Gastrocnemius medialis (tissue), 4 donors: ENCODE measurements at regions of chr6 and their contacts with region 1.

Region 1: DNA sequence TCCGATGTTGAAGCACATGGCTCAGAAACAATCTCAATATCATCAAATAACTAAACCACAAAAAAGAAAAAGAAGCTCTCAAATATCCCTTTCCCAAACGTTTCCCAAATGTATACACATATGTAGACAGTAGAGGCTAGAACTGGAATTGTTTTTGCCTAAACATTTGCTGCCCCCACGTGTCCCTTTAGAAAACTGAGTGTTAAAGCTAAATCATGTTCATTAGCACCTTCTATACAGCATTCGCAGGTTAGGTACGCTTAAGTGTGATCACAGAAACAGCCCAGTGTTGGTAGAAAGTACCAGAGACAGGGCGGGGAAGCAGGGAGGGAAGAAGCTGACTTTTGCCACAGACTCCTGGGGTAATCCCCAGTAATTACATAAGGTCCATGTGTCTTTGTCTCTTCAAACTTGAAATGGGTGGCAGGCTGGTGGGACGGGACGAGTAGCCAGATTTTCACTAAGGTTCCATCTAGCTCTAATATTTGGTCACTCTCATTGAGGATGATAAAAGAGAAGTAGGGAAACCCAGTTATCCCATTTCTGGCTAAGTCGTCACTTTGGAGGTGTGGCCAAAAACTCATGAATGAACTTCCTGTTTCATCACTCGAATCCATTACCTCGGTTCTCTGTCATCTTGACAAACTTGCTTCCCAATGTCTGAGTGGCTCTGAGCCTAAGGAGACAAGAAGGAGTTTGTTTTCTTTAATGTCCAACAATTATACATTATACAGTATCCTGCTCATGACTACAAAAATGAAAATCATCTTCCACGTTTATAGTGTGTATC is 15.0 kb upstream of the TFAP2A start:
- DNase-seq: no peak
- ATAC-seq: no peak
- H3K4me3 ChIP-seq: no peak overlapping the region
- H3K27ac ChIP-seq: no peak overlapping the region
- H3K4me1 ChIP-seq: peaks cover 4 to 10% of the 10 kb centered on the region in 2 donors
- H3K27me3 ChIP-seq: peaks cover 27 to 30% (median 28%) of the 10 kb centered on the region in 3 donors
- CTCF ChIP-seq: peak in 3 of 5 experiments; percentile 14 to 26 (median 15)
- POLR2A ChIP-seq: no peak

Region 2: DNA sequence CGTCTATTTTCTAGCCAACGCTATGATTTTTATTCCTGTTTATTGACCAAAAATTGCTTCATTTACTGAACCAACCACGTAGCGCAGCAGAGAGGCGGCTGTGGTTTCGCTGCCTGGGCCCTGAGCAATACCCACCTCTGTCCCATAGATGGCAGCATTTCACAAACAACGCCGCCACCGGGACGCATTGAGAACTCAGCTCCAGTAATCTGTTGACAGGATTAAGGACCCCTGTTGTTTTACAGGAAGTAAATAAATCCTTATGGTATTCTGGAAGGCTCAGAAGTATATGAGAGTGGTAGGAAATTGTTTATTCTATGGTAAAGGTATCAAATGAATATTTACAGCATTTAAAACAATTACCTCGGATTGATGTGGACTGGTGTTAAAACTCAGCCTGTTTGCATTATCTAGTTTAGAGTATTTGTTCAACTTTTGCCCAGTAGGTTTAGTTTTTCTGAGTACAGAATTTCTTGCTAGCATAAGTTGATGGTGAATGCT is 1446.6 kb before region 1 on chr6:
- in situ Hi-C with region 1: loop called (anchors 5 to 25 kb)
- intact Hi-C with region 1: loop called (anchors 5 kb)
- DNase-seq: peak; percentile 11 to 27
- ATAC-seq: peak; percentile 55 to 62
- H3K4me3 ChIP-seq: no peak overlapping the region
- H3K27ac ChIP-seq: no peak overlapping the region
- H3K4me1 ChIP-seq: no peaks in the 10 kb centered on the region
- H3K27me3 ChIP-seq: no peaks in the 10 kb centered on the region
- CTCF ChIP-seq: peak; percentile 42 to 89 (median 59)
- POLR2A ChIP-seq: no peak

Region 3: GRCh38 chr6:9250852-9251251 is 1179.0 kb before region 1 on chr6:
- in situ Hi-C with region 1: no loop called
- intact Hi-C with region 1: loop called (anchors 10 kb)
- DNase-seq: no peak
- ATAC-seq: no peak
- H3K4me3 ChIP-seq: no peak overlapping the region
- H3K27ac ChIP-seq: no peak overlapping the region
- H3K4me1 ChIP-seq: no peaks in the 10 kb centered on the region
- H3K27me3 ChIP-seq: no peaks in the 10 kb centered on the region
- CTCF ChIP-seq: peak in 1 of 5 experiments; percentile 16
- POLR2A ChIP-seq: no peak

Region 4: GRCh38 chr6:9540534-9541126 is 889.2 kb before region 1 on chr6:
- in situ Hi-C with region 1: loop called in 3 of 4 experiments (anchors 10 to 25 kb)
- intact Hi-C with region 1: no loop called
- DNase-seq: no peak
- ATAC-seq: no peak
- H3K4me3 ChIP-seq: no peak overlapping the region
- H3K27ac ChIP-seq: no peak overlapping the region
- H3K4me1 ChIP-seq: no peaks in the 10 kb centered on the region
- H3K27me3 ChIP-seq: no peaks in the 10 kb centered on the region
- CTCF ChIP-seq: peak in 2 of 5 experiments; percentile 21 to 33
- POLR2A ChIP-seq: no peak

Region 5: DNA sequence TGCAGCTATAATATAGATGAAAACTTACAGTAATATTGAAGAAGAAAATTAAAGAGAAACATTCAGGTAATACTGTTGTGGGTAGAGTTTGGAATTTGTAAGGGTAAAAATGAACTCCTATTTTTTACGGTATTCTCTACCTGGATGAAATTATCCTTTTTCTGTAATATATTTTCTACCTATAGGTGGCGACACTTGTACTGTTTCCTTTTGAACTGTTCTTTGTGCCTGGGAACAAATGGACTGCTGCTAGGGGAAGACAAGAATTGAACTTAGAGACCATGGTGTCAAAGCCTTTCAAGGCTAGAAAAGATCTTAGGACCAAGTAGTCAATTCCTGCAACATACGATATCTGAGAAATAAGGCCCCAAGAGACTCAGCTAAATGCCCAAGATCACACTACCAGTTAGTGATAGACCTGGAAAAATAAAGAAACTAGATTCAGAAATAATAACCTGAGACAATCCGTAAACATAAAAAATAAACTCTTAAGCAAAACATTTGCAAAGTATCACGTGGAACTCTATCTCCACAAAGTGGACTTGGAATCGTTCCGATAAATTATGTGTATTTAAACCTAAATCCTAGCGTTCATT is 398.8 kb before region 1 on chr6:
- in situ Hi-C with region 1: loop called in 2 of 4 experiments (anchors 10 to 25 kb)
- intact Hi-C with region 1: no loop called
- DNase-seq: no peak
- ATAC-seq: no peak
- H3K4me3 ChIP-seq: no peak overlapping the region
- H3K27ac ChIP-seq: no peak overlapping the region
- H3K4me1 ChIP-seq: no peaks in the 10 kb centered on the region
- H3K27me3 ChIP-seq: no peaks in the 10 kb centered on the region
- CTCF ChIP-seq: peak in 1 of 5 experiments; percentile 42
- POLR2A ChIP-seq: no peak